ENCODE measurements at regions of chr3 and their contacts with region 1.

Region 1: DNA sequence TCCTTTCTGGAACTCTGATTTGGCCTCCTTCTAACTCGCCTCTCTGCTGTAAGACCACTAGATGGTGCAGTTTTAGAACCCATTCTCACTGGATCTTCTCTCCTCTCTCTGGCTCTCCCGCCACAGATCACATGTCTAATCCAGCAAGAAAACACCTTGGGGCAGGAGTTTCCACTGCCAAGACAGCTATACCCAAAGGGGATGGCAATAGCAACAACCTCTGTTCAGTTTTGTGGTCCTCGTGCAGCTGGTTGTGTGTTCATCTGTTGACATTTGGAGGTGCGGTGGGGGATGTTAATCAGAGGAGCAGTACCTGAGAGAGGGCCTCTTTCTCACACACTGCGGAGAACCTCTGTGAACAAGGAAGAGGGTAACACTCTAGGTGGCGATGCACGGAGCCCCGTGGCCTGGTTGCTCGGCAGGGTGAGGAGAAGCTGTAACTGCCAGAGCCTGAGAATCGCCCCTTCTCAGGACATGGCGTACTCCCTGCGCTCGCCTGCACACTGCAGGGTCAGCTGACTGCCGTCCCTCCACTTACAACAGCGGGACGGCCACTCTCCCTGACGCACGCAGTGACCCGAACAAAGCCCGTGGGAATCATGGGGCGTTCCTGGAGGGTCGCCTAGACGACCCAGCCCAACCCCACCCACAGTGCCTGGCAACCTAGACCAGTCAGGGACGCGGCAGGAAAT is at the start of gene TEX55:
- DNase-seq: no peak

Region 2: GRCh38 chr3:118641608-118642007 is 504.0 kb before region 1 on chr3:
- intact Hi-C with region 1: no loop called
- DNase-seq: peak; percentile 24 to 95 (median 66)

Region 3: GRCh38 chr3:119240591-119241434 is 95.2 kb after region 1 on chr3 and contains the start of gene B4GALT4:
- intact Hi-C with region 1: loop called (anchors 1 kb)
- DNase-seq: peak; percentile 66 to 98 (median 81)

Measured in posterior cingulate gyrus (tissue), 11 donors.